Posterior cingulate gyrus (tissue), 11 donors: ENCODE measurements at regions of chr19 and their contacts with region 1.

Region 1: DNA sequence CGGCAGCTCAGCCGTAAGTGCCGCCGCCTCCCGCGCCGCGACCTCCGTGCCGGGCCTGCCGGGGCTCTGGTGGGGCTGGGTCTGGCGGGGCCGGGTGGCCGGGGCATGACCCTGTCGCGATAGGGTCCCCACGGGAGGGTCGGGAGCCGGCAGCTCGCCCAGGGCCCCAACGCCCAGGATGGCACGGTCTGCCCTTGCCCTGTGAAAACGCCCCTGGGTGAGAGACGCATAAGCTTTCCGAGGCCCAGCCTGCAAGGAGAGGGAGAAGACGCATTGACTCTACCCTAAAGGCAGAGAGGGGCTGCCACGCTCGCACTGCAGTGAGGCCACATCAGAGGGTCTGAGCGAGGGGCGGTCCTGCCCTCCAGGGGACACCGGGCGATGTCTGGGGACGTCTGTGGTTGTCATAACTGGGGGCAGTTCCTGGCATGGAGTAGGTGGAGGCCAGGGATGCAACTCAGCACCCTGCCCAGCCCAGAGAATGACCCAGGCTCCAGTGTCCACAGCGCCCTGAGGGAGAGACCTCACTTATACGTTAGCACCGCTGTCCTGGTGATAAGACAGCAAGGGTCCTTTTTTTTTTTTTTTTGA is 539 bp downstream of the ZNF554 start:
- DNase-seq: peak in 3 of 10 donors; percentile 21 to 86 (median 82)

Region 2: GRCh38 chr19:2750808-2751443 is 69.3 kb before region 1 on chr19:
- intact Hi-C with region 1: no loop called
- DNase-seq: no peak

Region 3: DNA sequence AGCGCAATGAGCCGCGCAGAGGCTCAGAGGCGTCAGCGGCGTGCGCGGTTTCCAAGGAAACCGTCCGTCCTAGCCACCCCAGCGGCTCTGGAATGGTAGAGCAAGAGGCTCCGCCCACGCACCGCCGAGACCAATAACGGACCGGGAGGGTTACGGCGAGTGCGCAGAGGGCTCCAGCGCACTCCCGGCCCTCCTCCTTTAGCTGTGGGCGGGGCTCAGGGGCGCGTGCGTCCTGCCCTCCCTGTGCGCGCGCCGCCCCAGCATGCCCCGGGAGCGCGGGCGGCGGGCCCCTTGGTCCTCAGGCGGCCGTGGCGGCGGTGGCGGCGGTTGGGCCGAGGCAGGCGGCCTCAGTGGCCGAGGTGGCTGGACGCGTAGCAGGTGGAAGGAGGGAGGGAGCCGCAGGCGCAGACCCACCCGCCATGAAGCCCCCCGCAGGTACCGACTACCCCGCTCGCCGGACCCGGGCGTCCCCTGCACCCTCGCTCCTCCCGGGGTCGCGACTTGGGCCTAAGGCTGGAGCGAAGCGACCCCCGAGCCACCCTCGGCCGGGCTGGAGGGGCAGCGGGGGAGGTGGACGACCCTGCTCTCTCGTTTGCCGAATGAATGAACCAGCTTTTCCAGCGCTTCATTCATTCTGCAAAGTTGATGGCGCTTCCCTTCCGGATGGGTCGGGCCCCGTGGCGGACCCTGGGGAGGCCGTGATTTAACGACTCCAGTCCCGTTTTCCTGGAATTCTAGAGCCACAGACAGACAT is 34.8 kb before region 1 on chr19 and contains the start of gene THOP1:
- intact Hi-C with region 1: loop called (anchors 5 kb)
- DNase-seq: peak; percentile 94 to 100 (median 99)